ENCODE measurements at regions of chr2 and their contacts with region 1.

Region 1: GRCh38 chr2:85410584-85411404 is 628 bp upstream of the CAPG start:
- DNase-seq: no peak
- ATAC-seq: no peak
- H3K4me3 ChIP-seq: no peak overlapping the region
- H3K27ac ChIP-seq: no peak overlapping the region
- H3K4me1 ChIP-seq: no peaks in the 10 kb centered on the region
- H3K27me3 ChIP-seq: peaks cover 0 to 13% (median 10%) of the 10 kb centered on the region in 3 donors
- CTCF ChIP-seq: no peak
- POLR2A ChIP-seq: no peak

Region 2: GRCh38 chr2:85369500-85369899 is 41.3 kb before region 1 on chr2:
- in situ Hi-C with region 1: no loop called
- intact Hi-C with region 1: no loop called
- DNase-seq: no peak
- ATAC-seq: no peak
- H3K4me3 ChIP-seq: no peak overlapping the region
- H3K27ac ChIP-seq: no peak overlapping the region
- H3K4me1 ChIP-seq: no peaks in the 10 kb centered on the region
- H3K27me3 ChIP-seq: no peaks in the 10 kb centered on the region
- CTCF ChIP-seq: no peak
- POLR2A ChIP-seq: no peak

Region 3: GRCh38 chr2:85445316-85446295 is 34.8 kb after region 1 on chr2:
- in situ Hi-C with region 1: no loop called
- intact Hi-C with region 1: loop called (anchors 1 kb)
- DNase-seq: peak in 1 of 2 donors; percentile 62
- ATAC-seq: peak; percentile 20 to 45
- H3K4me3 ChIP-seq: no peak overlapping the region
- H3K27ac ChIP-seq: peak overlapping the region; percentile 1 to 73 (median 50)
- H3K4me1 ChIP-seq: peaks cover 0 to 14% of the 10 kb centered on the region in 2 donors
- H3K27me3 ChIP-seq: no peaks in the 10 kb centered on the region
- CTCF ChIP-seq: no peak
- POLR2A ChIP-seq: peak in 1 of 2 donors; percentile 14

Region 4: GRCh38 chr2:85707304-85707703 is 296.5 kb after region 1 on chr2:
- in situ Hi-C with region 1: no loop called
- intact Hi-C with region 1: no loop called
- DNase-seq: peak; percentile 72 to 79
- ATAC-seq: peak; percentile 42 to 52
- H3K4me3 ChIP-seq: no peak overlapping the region
- H3K27ac ChIP-seq: peak overlapping the region; percentile 92 to 97 (median 95)
- H3K4me1 ChIP-seq: peaks cover 62 to 81% of the 10 kb centered on the region in 2 donors
- H3K27me3 ChIP-seq: no peaks in the 10 kb centered on the region
- CTCF ChIP-seq: peak; percentile 89 to 92 (median 91)
- POLR2A ChIP-seq: no peak